T-cell (primary cell): ENCODE measurements at regions of chr1 and their contacts with region 1.

Region 1: GRCh38 chr1:174999216-174999925 is 376 bp upstream of the CACYBP start:
- DNase-seq: peak; percentile 90 to 99 (median 97)
- ATAC-seq: peak; percentile 78 to 85 (median 80)
- H3K4me3 ChIP-seq: peak overlapping the region; percentile 75 to 82
- H3K4me3 Mint-ChIP-seq: no peak overlapping the region
- H3K27ac ChIP-seq: peak overlapping the region; percentile 99
- H3K27ac Mint-ChIP-seq: no peak overlapping the region
- H3K4me1 ChIP-seq: peaks cover 22% of the 10 kb centered on the region in 2 experiments
- H3K4me1 Mint-ChIP-seq: peaks cover 37 to 51% (median 47%) of the 10 kb centered on the region in 3 donors
- H3K27me3 ChIP-seq: no peaks in the 10 kb centered on the region
- H3K27me3 Mint-ChIP-seq: no peaks in the 10 kb centered on the region

Region 2: DNA sequence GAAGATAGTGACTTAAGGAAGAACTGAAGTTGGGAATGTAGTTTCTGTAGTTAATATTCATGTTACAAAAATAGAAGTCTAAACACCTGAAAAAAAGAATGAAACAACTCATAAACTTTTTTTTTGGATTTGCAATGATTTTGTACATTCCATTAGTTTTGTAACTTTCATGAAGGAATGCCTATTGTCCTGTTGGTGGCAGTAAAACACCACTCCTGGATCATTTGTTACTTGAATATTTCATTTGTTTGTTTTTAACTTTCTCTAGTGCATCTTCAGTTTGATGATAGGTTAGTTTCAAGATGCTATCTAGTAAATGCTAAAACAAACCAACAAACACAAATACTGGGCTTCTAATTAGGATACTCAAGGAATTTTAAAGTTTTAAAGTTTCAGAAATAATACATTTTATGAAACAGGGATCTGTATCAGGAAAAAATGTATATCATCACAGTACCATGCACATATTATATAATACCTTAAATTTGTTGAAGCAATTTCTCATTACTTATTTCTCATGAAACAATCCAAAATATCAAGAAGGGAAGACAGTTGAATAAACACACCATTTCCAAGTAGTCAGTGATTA is 229.3 kb before region 1 on chr1:
- CTCF ChIA-PET with region 1: interaction called, 3 to 12 read pairs
- POLR2A ChIA-PET with region 1: interaction called in 1 of 2 experiments, 3 read pairs
- DNase-seq: peak in 9 of 35 experiments; percentile 5 to 76 (median 19)
- ATAC-seq: peak in 2 of 4 experiments; percentile 32 to 57
- H3K4me3 ChIP-seq: no peak overlapping the region
- H3K4me3 Mint-ChIP-seq: no peak overlapping the region
- H3K27ac ChIP-seq: no peak overlapping the region
- H3K27ac Mint-ChIP-seq: no peak overlapping the region
- H3K4me1 ChIP-seq: no peaks in the 10 kb centered on the region
- H3K4me1 Mint-ChIP-seq: peaks cover 0 to 4% (median 3%) of the 10 kb centered on the region in 3 donors
- H3K27me3 ChIP-seq: no peaks in the 10 kb centered on the region
- H3K27me3 Mint-ChIP-seq: no peaks in the 10 kb centered on the region

Region 3: GRCh38 chr1:174883409-174883808 is 116.0 kb before region 1 on chr1:
- CTCF ChIA-PET with region 1: interaction called in 1 of 2 experiments, 8 read pairs
- POLR2A ChIA-PET with region 1: interaction called in 1 of 2 experiments, 10 read pairs
- DNase-seq: peak in 1 of 35 experiments; percentile 45
- ATAC-seq: peak; percentile 54 to 74 (median 62)
- H3K4me3 ChIP-seq: no peak overlapping the region
- H3K4me3 Mint-ChIP-seq: no peak overlapping the region
- H3K27ac ChIP-seq: no peak overlapping the region
- H3K27ac Mint-ChIP-seq: peak overlapping the region in 1 of 2 donors; percentile 16
- H3K4me1 ChIP-seq: no peaks in the 10 kb centered on the region
- H3K4me1 Mint-ChIP-seq: peaks cover 8 to 10% (median 9%) of the 10 kb centered on the region in 3 donors
- H3K27me3 ChIP-seq: no peaks in the 10 kb centered on the region
- H3K27me3 Mint-ChIP-seq: no peaks in the 10 kb centered on the region

Region 4: GRCh38 chr1:174922121-174922520 is 77.2 kb before region 1 on chr1:
- CTCF ChIA-PET with region 1: no interaction called
- POLR2A ChIA-PET with region 1: no interaction called
- DNase-seq: no peak
- ATAC-seq: no peak
- H3K4me3 ChIP-seq: no peak overlapping the region
- H3K4me3 Mint-ChIP-seq: no peak overlapping the region
- H3K27ac ChIP-seq: no peak overlapping the region
- H3K27ac Mint-ChIP-seq: no peak overlapping the region
- H3K4me1 ChIP-seq: no peaks in the 10 kb centered on the region
- H3K4me1 Mint-ChIP-seq: peaks cover 0 to 2% (median under 1%) of the 10 kb centered on the region in 3 donors
- H3K27me3 ChIP-seq: no peaks in the 10 kb centered on the region
- H3K27me3 Mint-ChIP-seq: no peaks in the 10 kb centered on the region

Region 5: GRCh38 chr1:174968750-174969244 is 30.6 kb before region 1 on chr1:
- CTCF ChIA-PET with region 1: interaction called in 1 of 2 experiments, 12 read pairs
- POLR2A ChIA-PET with region 1: interaction called, 7 to 58 read pairs
- DNase-seq: peak in 25 of 35 experiments; percentile 8 to 87 (median 34)
- ATAC-seq: peak; percentile 68 to 74 (median 71)
- H3K4me3 ChIP-seq: peak overlapping the region in 1 of 2 donors; percentile 13
- H3K4me3 Mint-ChIP-seq: peak overlapping the region; percentile 70 to 75 (median 74)
- H3K27ac ChIP-seq: peak overlapping the region; percentile 81
- H3K27ac Mint-ChIP-seq: peak overlapping the region; percentile 93 to 95
- H3K4me1 ChIP-seq: peaks cover 44 to 69% of the 10 kb centered on the region in 2 experiments
- H3K4me1 Mint-ChIP-seq: peaks cover 78 to 82% (median 79%) of the 10 kb centered on the region in 3 donors
- H3K27me3 ChIP-seq: no peaks in the 10 kb centered on the region
- H3K27me3 Mint-ChIP-seq: no peaks in the 10 kb centered on the region

Region 6: DNA sequence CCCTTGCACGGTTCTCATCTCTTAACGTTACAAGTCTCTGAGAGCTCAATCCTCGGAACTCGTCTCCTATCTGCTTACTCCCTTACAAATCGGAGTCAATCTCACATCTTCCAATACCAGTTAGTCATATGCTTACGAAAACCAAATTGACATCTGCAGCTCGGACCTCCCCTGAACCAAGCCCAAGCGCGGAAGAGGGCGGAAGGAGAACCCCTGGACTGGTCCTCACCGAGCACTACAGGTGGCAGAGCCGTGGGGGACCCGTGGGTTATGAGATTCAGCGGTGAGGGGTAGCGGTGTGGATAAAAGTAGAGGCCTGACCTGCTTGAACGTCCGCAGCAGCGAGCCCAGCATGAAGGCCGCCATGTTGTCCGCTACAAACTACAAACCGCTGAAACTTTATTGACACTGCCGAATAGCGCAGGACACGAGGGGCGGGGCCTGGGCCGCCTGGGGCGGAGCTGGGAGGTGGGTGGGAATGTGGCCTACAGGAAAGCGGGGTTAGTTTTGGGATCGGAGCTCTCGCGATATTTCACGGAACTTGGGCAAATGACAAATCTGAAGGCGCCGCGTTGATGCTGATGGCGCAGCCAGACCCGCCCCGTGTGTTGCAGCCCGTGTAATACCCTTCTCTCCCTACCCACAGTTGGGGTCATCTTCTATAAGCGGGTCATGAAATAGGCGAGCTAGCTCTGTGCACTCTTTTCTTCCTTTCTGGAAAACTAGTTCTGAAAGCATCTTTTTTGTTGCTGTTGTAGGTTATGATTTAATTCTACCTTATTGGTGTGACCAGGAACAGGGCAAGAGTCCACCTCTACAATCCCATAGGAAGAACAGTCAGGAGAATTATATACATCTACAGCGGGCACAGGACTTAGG is 23.9 kb after region 1 on chr1 and contains the start of gene MRPS14:
- CTCF ChIA-PET with region 1: interaction called, 3 to 35 read pairs
- POLR2A ChIA-PET with region 1: interaction called, 3 to 39 read pairs
- DNase-seq: peak; percentile 94 to 99 (median 97)
- ATAC-seq: peak; percentile 91 to 96 (median 94)
- H3K4me3 ChIP-seq: peak within 1 kb of the TSS; percentile 89 to 100
- H3K4me3 Mint-ChIP-seq: peak within 1 kb of the TSS; percentile 90 to 96 (median 90)
- H3K27ac ChIP-seq: peak within 1 kb of the TSS; percentile 90
- H3K27ac Mint-ChIP-seq: peak within 1 kb of the TSS; percentile 81 to 94
- H3K4me1 ChIP-seq: peaks cover 8 to 14% of the 10 kb centered on the region in 2 experiments
- H3K4me1 Mint-ChIP-seq: peaks cover 35 to 39% (median 36%) of the 10 kb centered on the region in 3 donors
- H3K27me3 ChIP-seq: no peaks in the 10 kb centered on the region
- H3K27me3 Mint-ChIP-seq: no peaks in the 10 kb centered on the region
- total RNA-seq, gene MRPS14: 14.3 to 28.8 (median 25.8) TPM

Region 7: DNA sequence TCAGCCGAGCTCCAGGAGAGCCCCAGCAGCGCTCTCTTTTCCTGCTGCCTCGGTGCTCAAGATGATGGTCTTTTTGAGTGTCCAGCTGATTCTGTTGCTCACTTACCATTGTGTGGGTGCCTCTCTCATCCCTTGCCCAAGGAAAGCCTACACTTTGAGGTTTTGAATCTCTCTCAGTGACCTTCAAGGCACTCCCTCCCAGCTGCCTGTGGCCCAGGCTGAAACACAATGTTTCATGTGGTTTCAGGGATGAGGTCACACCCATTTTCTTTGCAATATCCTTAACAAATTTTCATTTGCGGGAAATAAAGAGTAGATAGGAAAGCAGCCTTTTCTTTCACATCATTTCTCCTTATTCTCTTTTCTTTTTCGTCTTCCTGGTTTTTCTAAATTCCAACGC is 36.5 kb after region 1 on chr1:
- CTCF ChIA-PET with region 1: no interaction called
- POLR2A ChIA-PET with region 1: no interaction called
- DNase-seq: no peak
- ATAC-seq: no peak
- H3K4me3 ChIP-seq: no peak overlapping the region
- H3K4me3 Mint-ChIP-seq: no peak overlapping the region
- H3K27ac ChIP-seq: no peak overlapping the region
- H3K27ac Mint-ChIP-seq: no peak overlapping the region
- H3K4me1 ChIP-seq: no peaks in the 10 kb centered on the region
- H3K4me1 Mint-ChIP-seq: no peaks in the 10 kb centered on the region
- H3K27me3 ChIP-seq: no peaks in the 10 kb centered on the region
- H3K27me3 Mint-ChIP-seq: peaks cover 2 to 3% of the 10 kb centered on the region in 2 donors

Region 8: DNA sequence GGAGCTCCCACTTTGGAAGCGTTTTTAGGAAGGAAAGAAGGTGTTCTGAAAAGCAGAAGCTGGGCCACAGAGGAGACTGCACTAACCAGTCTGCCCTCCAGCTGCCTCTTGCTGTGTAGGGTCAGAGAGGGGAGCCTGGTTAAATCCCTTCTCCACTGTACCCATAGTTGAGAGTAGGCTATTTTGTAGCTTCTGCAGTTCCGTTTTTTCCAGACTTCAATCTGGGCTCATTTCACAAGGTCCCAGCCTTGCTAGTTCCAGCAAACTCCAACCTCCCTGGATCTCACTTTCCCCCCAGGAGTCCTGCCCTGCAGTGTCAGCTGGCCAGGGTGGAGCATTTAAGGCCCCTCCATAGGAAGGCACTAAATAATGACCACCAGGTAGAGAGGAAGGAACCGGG is 79.3 kb after region 1 on chr1:
- CTCF ChIA-PET with region 1: no interaction called
- POLR2A ChIA-PET with region 1: no interaction called
- DNase-seq: no peak
- ATAC-seq: no peak
- H3K4me3 ChIP-seq: no peak overlapping the region
- H3K4me3 Mint-ChIP-seq: no peak overlapping the region
- H3K27ac ChIP-seq: no peak overlapping the region
- H3K27ac Mint-ChIP-seq: no peak overlapping the region
- H3K4me1 ChIP-seq: no peaks in the 10 kb centered on the region
- H3K4me1 Mint-ChIP-seq: no peaks in the 10 kb centered on the region
- H3K27me3 ChIP-seq: peaks cover 0 to 17% of the 10 kb centered on the region in 2 experiments
- H3K27me3 Mint-ChIP-seq: peaks cover 8 to 13% of the 10 kb centered on the region in 2 donors